Aorta (tissue), 5 donors: ENCODE measurements at regions of chr1 and their contacts with region 1.

Region 1: DNA sequence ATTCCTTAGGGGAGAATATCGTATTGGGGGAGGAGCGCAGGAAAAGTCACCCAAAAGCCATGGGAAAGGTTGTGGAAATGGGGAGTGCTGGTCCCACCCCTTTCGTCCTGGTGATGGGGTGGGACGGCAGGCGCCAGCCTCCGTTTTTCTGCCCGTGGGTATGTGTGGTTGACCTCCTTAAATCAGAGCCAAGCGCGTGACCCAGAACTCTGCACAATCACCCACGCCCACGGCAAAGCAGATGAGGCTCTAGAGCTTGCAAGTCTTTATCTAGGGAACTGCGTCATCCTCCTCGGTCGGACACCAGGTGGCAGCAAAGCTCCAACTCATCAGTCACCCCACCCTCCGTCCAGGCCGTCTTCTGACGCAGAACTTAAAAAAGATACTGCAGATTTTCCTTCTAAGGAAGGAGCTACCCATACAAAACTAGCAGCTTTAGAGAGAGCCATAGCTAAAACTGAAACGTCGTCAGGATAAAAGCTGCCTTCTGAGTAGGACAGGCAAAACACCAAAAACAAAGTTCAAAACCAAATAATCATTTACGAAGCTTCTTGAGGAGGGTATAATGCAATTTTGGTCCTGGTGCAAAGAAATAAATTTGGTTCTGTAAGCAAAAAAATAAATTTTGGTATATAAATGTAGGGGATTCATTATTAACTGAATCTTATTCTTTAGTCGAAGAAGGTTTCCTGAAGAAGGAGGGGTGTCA is 62.0 kb downstream of the TBX19 start:
- DNase-seq: peak; percentile 92 to 93
- ATAC-seq: peak; percentile 96
- H3K4me3 ChIP-seq: no peak overlapping the region
- H3K27ac ChIP-seq: peak overlapping the region; percentile 0 to 19
- H3K4me1 ChIP-seq: no peaks in the 10 kb centered on the region
- H3K27me3 ChIP-seq: no peaks in the 10 kb centered on the region

Region 2: DNA sequence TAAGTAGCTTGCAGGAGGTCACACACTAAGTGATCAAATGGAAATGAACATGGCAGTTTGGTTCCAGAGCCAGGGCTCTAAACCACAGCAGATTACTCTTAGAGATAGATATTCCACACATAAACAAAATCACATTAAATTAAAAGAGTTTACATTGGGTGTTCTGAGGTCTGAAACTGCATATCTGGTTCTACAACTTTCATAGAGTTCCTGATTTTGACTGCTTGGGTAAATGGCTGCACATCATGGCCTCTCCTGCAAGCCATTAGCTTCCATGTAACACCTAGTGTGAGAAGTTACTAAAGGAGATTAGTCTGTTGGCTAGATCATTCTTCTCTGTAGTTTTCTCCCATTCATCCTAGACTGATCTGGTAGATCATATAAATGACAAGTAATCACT is 213.9 kb after region 1 on chr1:
- intact Hi-C with region 1: no loop called
- DNase-seq: no peak
- ATAC-seq: no peak
- H3K4me3 ChIP-seq: no peak overlapping the region
- H3K27ac ChIP-seq: no peak overlapping the region
- H3K4me1 ChIP-seq: no peaks in the 10 kb centered on the region
- H3K27me3 ChIP-seq: no peaks in the 10 kb centered on the region

Region 3: GRCh38 chr1:169348383-169349036 is 1005.8 kb after region 1 on chr1:
- intact Hi-C with region 1: loop called in 1 of 2 experiments (anchors 5 kb)
- DNase-seq: no peak
- ATAC-seq: no peak
- H3K4me3 ChIP-seq: no peak overlapping the region
- H3K27ac ChIP-seq: no peak overlapping the region
- H3K4me1 ChIP-seq: no peaks in the 10 kb centered on the region
- H3K27me3 ChIP-seq: no peaks in the 10 kb centered on the region